Naive thymus-derived CD4-positive, alpha-beta T cell (primary cell): ENCODE measurements at regions of chr5 and their contacts with region 1.

Region 1: DNA sequence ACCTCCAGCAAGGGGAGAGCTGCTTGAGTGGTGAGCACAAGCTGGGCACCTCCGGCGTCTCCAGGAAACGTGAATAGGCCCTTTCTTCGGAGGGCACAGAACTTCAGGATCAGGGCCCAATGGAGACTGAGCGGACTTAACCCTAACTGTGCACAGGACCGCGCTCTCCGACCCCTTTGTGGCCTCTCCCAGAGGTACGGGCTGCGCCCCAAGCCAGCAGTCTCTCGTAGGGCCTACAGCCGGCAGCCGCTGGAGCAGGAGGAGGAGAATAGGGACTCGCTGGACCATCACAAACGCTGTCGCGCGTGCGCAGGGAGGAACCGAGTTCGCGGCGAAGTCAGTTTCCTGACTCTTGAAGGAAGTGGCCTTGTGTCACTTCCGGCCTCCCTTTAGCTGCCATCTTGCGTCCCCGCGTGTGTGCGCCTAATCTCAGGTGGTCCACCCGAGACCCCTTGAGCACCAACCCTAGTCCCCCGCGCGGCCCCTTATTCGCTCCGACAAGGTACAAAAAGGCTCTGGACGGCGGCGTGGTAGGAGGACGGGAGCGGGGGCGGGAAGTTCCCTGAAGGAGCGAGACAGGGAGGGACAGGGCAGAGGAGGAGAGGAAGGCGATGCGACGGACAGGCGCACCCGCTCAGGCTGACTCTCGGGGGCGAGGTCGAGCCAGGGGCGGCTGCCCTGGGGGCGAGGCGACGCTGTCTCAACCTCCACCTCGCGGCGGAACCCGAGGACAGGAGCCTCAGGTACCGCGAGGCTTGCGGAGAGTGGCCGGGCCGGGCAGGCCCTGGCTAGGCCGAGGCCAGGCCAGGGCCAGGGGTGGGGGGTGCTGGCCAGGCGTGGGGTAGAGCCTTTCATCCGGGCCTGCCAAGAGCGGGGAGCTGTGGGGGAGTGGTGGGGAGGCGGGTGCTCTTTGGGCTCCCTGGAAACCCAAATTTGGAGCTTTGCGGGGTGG is at the start of gene BTF3:
- DNase-seq: peak; percentile 83 to 94 (median 91)
- ATAC-seq: peak; percentile 96
- H3K4me3 ChIP-seq: peak within 1 kb of the TSS; percentile 81
- H3K4me3 Mint-ChIP-seq: peak within 1 kb of the TSS; percentile 92 to 99 (median 97)
- H3K27ac ChIP-seq: peak within 1 kb of the TSS; percentile 93
- H3K27ac Mint-ChIP-seq: peak within 1 kb of the TSS; percentile 97 to 100 (median 99)
- H3K4me1 ChIP-seq: peaks cover 22 to 31% of the 10 kb centered on the region in 2 donors
- H3K4me1 Mint-ChIP-seq: peaks cover 26 to 57% (median 41%) of the 10 kb centered on the region in 7 donors
- H3K27me3 ChIP-seq: peaks cover 0 to 4% of the 10 kb centered on the region in 2 donors
- H3K27me3 Mint-ChIP-seq: peaks cover 4 to 15% (median 13%) of the 10 kb centered on the region in 5 donors
- total RNA-seq, gene BTF3: 557 to 758 (median 700) TPM

Region 2: GRCh38 chr5:72319976-72320752 is 1178.2 kb before region 1 on chr5 and contains the starts of genes MRPS27 and PTCD2:
- CTCF ChIA-PET with region 1: no interaction called
- POLR2A ChIA-PET with region 1: interaction called, 4 read pairs
- intact Hi-C with region 1: loop called (anchors 1 to 5 kb)
- DNase-seq: peak; percentile 71 to 96 (median 94)
- ATAC-seq: peak; percentile 100
- H3K4me3 ChIP-seq: peak within 1 kb of the TSS; percentile 93
- H3K4me3 Mint-ChIP-seq: peak within 1 kb of the TSS; percentile 93 to 100 (median 98)
- H3K27ac ChIP-seq: peak within 1 kb of the TSS; percentile 89
- H3K27ac Mint-ChIP-seq: peak within 1 kb of the TSS; percentile 88 to 99 (median 95)
- H3K4me1 ChIP-seq: peaks cover 7 to 14% of the 10 kb centered on the region in 2 donors
- H3K4me1 Mint-ChIP-seq: peaks cover 24 to 65% (median 47%) of the 10 kb centered on the region in 7 donors
- H3K27me3 ChIP-seq: no peaks in the 10 kb centered on the region
- H3K27me3 Mint-ChIP-seq: no peaks in the 10 kb centered on the region
- total RNA-seq, gene MRPS27: 36.6 to 54.0 (median 39.5) TPM
- total RNA-seq, gene PTCD2: 5.0 to 12.6 (median 11.2) TPM

Region 3: DNA sequence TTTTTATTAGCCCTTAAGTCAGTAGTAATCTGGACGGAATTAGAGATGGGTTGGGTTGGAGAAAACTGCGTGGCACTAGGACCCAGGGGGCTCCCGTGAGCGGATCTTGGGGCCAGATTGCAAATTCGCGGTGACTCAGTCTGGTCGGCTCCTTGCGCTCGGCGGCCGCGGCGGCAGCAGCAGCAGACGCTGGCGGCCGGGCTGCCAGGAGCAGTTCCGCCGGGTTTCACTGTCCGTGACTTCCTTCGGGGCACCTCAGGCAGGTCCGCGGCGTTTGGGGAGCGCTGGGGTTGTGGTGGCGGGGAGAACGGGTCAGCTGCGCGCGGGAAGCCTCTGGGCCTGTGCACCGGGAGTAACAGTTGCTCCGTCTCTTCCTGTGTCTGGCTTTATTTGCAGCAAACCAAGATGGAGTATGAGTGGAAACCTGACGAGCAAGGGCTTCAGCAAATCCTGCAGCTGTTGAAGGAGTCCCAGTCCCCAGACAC is 650.3 kb before region 1 on chr5:
- CTCF ChIA-PET with region 1: no interaction called
- POLR2A ChIA-PET with region 1: no interaction called
- intact Hi-C with region 1: loop called (anchors 1 kb)
- DNase-seq: peak; percentile 67 to 86 (median 83)
- ATAC-seq: peak; percentile 94
- H3K4me3 ChIP-seq: peak overlapping the region; percentile 93
- H3K4me3 Mint-ChIP-seq: peak overlapping the region; percentile 92 to 99 (median 98)
- H3K27ac ChIP-seq: peak overlapping the region; percentile 86
- H3K27ac Mint-ChIP-seq: peak overlapping the region; percentile 93 to 98 (median 96)
- H3K4me1 ChIP-seq: peaks cover 24 to 31% of the 10 kb centered on the region in 2 donors
- H3K4me1 Mint-ChIP-seq: peaks cover 30 to 88% (median 64%) of the 10 kb centered on the region in 7 donors
- H3K27me3 ChIP-seq: no peaks in the 10 kb centered on the region
- H3K27me3 Mint-ChIP-seq: peaks cover 0 to 16% (median 0%) of the 10 kb centered on the region in 5 donors

Region 4: DNA sequence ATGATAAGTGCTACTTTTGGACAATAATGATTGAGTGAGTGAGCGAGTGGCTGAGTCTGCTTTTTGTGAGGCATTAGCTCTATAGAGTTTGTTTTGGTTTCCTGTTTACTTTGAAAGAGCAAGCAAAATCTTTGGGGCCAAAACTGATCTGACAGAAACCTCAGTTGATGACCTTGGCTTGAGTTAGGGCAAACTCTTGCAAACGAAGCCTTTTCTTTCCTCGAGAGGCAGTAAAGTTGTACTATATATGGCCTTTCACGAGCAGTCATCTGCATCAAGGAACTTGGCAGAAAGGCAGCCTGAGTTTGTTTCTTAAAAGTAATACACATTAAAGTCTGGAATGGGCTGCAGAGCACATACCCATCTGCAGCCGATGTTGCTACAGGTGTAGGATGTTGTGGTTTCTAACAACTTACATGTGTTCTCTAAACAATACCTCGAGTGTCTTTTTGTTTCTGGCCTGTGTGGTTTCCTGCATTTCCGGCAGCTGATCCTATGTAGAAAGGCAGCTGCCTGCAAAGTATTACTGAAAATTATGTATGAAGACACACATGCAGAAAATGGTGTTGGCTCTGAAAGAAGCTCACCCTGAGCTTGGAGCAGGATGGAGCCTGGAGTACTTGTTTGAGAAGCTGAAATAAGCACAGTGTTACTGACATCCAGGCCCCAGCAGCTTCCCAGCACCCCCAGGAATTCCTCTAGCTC is 110.6 kb before region 1 on chr5:
- CTCF ChIA-PET with region 1: no interaction called
- POLR2A ChIA-PET with region 1: no interaction called
- intact Hi-C with region 1: loop called in 1 of 2 experiments (anchors 1 kb)
- DNase-seq: peak in 8 of 9 donors; percentile 28 to 90 (median 82)
- ATAC-seq: peak; percentile 96
- H3K4me3 ChIP-seq: peak overlapping the region; percentile 3
- H3K4me3 Mint-ChIP-seq: peak overlapping the region; percentile 39 to 76 (median 72)
- H3K27ac ChIP-seq: no peak overlapping the region
- H3K27ac Mint-ChIP-seq: peak overlapping the region in 6 of 9 donors; percentile 1 to 81 (median 37)
- H3K4me1 ChIP-seq: peaks cover 20 to 31% of the 10 kb centered on the region in 2 donors
- H3K4me1 Mint-ChIP-seq: peaks cover 16 to 34% (median 24%) of the 10 kb centered on the region in 7 donors
- H3K27me3 ChIP-seq: peaks cover 8 to 11% of the 10 kb centered on the region in 2 donors
- H3K27me3 Mint-ChIP-seq: peaks cover 24 to 68% (median 35%) of the 10 kb centered on the region in 5 donors

Region 5: GRCh38 chr5:73422164-73422563 is 76.2 kb before region 1 on chr5:
- CTCF ChIA-PET with region 1: no interaction called
- POLR2A ChIA-PET with region 1: no interaction called
- intact Hi-C with region 1: no loop called
- DNase-seq: no peak
- ATAC-seq: no peak
- H3K4me3 ChIP-seq: no peak overlapping the region
- H3K4me3 Mint-ChIP-seq: no peak overlapping the region
- H3K27ac ChIP-seq: no peak overlapping the region
- H3K27ac Mint-ChIP-seq: no peak overlapping the region
- H3K4me1 ChIP-seq: peaks cover 3 to 8% of the 10 kb centered on the region in 2 donors
- H3K4me1 Mint-ChIP-seq: peaks cover 3 to 18% (median 14%) of the 10 kb centered on the region in 7 donors
- H3K27me3 ChIP-seq: peaks cover 20 to 26% of the 10 kb centered on the region in 2 donors
- H3K27me3 Mint-ChIP-seq: peaks cover 72 to 84% (median 77%) of the 10 kb centered on the region in 5 donors

Region 6: GRCh38 chr5:73454351-73455036 is 43.8 kb before region 1 on chr5:
- CTCF ChIA-PET with region 1: interaction called, 3 read pairs
- POLR2A ChIA-PET with region 1: interaction called, 4 read pairs
- intact Hi-C with region 1: loop called in 1 of 2 experiments (anchors 2 kb)
- DNase-seq: peak in 4 of 9 donors; percentile 42 to 49 (median 45)
- ATAC-seq: peak; percentile 86
- H3K4me3 ChIP-seq: no peak overlapping the region
- H3K4me3 Mint-ChIP-seq: no peak overlapping the region
- H3K27ac ChIP-seq: no peak overlapping the region
- H3K27ac Mint-ChIP-seq: no peak overlapping the region
- H3K4me1 ChIP-seq: peaks cover 0 to 4% of the 10 kb centered on the region in 2 donors
- H3K4me1 Mint-ChIP-seq: peaks cover 2 to 12% (median 7%) of the 10 kb centered on the region in 7 donors
- H3K27me3 ChIP-seq: peaks cover 35 to 49% of the 10 kb centered on the region in 2 donors
- H3K27me3 Mint-ChIP-seq: peaks cover 75 to 84% (median 80%) of the 10 kb centered on the region in 5 donors

Region 7: DNA sequence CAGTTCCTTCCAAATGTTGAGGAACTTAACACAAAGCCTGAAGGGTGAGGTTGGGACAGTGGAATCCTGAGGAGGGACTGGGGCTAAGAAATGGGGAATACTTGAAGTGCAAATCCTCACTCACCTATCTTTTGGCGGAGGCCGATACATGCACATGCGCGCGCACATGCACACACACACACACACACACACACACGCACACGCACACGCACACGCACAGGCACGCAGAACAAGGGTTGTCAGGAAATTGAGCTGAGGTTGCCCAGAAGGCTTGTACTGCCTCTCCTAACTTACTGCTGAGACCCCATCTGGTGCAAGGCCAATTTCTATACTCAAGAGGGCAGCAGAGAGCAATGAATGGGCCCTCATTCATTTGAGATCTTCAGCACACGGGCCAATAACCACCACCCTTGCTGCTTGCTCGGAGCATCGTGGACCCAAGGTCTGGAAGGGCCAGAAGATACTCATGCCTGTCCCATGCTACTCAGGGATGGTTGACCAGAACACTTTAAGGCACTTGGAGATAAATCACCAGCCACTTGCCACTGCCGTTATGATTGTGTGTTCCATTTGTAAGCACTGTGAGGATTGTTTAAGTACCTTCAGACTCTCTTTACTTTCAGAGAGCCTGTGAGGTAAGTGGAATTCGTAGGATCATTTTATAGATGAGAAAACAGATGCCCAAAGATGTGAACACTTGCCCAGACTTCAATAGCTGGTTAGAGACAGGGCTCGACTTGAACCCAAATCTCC is 21.4 kb after region 1 on chr5:
- CTCF ChIA-PET with region 1: no interaction called
- POLR2A ChIA-PET with region 1: interaction called, 3 read pairs
- intact Hi-C with region 1: loop called (anchors 1 kb)
- DNase-seq: peak; percentile 29 to 82 (median 80)
- ATAC-seq: peak; percentile 99
- H3K4me3 ChIP-seq: no peak overlapping the region
- H3K4me3 Mint-ChIP-seq: peak overlapping the region in 8 of 10 donors; percentile 55 to 72 (median 66)
- H3K27ac ChIP-seq: no peak overlapping the region
- H3K27ac Mint-ChIP-seq: peak overlapping the region in 8 of 9 donors; percentile 20 to 86 (median 66)
- H3K4me1 ChIP-seq: no peaks in the 10 kb centered on the region
- H3K4me1 Mint-ChIP-seq: peaks cover 8 to 9% (median 9%) of the 10 kb centered on the region in 7 donors
- H3K27me3 ChIP-seq: no peaks in the 10 kb centered on the region
- H3K27me3 Mint-ChIP-seq: peaks cover 0 to 2% (median 0%) of the 10 kb centered on the region in 5 donors

Region 8: GRCh38 chr5:74865804-74866595 is 1367.7 kb after region 1 on chr5 and contains the start of gene FAM169A:
- CTCF ChIA-PET with region 1: no interaction called
- POLR2A ChIA-PET with region 1: no interaction called
- intact Hi-C with region 1: loop called in 1 of 2 experiments (anchors 5 kb)
- DNase-seq: peak; percentile 40 to 71 (median 61)
- ATAC-seq: peak; percentile 81
- H3K4me3 ChIP-seq: peak within 1 kb of the TSS; percentile 69
- H3K4me3 Mint-ChIP-seq: peak within 1 kb of the TSS; percentile 87 to 99 (median 97)
- H3K27ac ChIP-seq: peak within 1 kb of the TSS; percentile 78
- H3K27ac Mint-ChIP-seq: peak within 1 kb of the TSS; percentile 79 to 97 (median 95)
- H3K4me1 ChIP-seq: peaks cover 4 to 8% of the 10 kb centered on the region in 2 donors
- H3K4me1 Mint-ChIP-seq: peaks cover 7 to 49% (median 42%) of the 10 kb centered on the region in 7 donors
- H3K27me3 ChIP-seq: no peaks in the 10 kb centered on the region
- H3K27me3 Mint-ChIP-seq: peaks cover 0 to 26% (median 0%) of the 10 kb centered on the region in 5 donors
- total RNA-seq, gene FAM169A: 2.3 to 22.4 (median 15.6) TPM